ENCODE measurements at regions of chr4 and their contacts with region 1.

Region 1: DNA sequence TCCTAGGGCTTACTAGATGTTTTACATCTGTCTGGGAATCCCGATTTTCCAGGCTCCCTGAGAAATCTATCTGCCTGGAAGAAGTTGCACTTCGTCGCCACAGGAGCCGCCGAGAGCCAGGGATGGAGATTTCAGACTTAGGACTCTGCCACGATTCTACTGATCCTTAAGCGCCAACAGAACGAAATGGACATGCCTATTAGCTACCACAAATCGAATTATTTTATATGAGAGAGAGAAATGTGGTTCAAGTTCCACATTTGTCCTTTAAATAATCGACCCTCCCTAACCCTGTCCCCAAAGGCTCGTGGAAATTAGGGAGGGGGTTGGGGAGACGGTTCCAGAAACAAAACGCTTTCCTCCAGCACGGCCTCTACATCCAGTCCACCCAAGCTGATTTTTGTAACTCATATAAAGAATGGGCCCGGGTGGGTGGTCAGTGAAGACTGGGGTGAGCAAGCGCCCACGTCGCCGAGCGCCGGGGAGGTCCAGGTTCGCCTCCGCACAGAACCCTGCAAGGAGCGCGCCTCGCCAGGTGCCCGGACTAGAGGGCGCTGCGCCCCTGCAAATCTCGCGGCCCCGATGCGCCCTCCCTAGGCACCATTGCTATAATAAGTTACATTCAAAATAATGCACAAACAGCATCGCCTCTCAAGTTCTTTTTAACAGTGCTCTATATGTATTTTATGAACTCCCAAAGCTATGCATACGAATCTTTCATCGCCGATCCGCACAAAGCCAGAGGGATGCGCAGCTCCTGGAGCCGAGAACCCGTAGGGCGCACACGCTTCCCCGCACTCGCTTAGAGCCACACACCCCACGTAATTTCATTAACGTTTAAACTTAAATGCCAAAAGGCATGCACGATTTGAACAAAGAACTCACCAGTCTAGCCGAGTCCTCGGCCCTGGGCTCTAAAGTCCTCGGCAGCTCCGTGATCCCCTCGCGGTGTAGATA is 2.1 kb upstream of the FAT1 start:
- DNase-seq: peak; percentile 83
- H3K4me3 Mint-ChIP-seq: peak overlapping the region; percentile 93
- H3K27ac Mint-ChIP-seq: peak overlapping the region; percentile 93
- H3K4me1 Mint-ChIP-seq: peaks cover 30% of the 10 kb centered on the region
- H3K27me3 Mint-ChIP-seq: no peaks in the 10 kb centered on the region
- CTCF ChIP-seq: peak; percentile 75

Region 2: DNA sequence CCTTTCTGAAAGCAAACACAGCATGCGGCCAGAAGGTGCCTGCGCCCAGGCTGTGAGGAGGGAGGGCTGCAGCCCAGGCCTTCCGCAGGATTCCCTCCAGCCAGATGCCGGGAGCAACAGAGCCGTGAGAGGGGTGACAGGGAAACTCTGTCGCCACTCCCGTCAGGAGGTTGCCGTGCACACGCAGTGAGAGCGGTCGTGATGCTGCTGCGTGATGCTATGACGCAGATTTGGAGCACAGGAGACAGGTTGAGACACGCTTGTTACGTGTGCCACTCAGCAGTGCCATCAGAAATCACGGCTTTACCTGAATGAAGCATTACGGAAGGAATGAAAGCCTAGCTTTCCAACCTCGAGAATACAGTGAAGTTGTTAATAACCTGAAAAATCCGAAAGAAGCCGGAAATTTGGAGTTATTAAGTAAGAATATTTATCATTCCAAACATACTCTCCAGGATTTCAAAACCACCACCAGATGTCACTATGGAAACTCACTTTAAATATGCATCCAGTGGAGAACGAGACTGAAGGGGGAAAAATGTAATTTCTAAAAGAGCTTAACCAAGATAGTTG is 56.5 kb before region 1 on chr4:
- CTCF ChIA-PET with region 1: interaction called, 18 read pairs
- POLR2A ChIA-PET with region 1: interaction called, 40 read pairs
- intact Hi-C with region 1: loop called (anchors 1 kb)
- DNase-seq: peak; percentile 56
- H3K4me3 Mint-ChIP-seq: peak overlapping the region; percentile 17
- H3K27ac Mint-ChIP-seq: peak overlapping the region; percentile 63
- H3K4me1 Mint-ChIP-seq: peaks cover 34% of the 10 kb centered on the region
- H3K27me3 Mint-ChIP-seq: no peaks in the 10 kb centered on the region
- CTCF ChIP-seq: peak; percentile 18

Region 3: GRCh38 chr4:186845137-186845842 is 119.5 kb after region 1 on chr4:
- CTCF ChIA-PET with region 1: no interaction called
- POLR2A ChIA-PET with region 1: interaction called, 21 read pairs
- intact Hi-C with region 1: loop called (anchors 5 kb)
- DNase-seq: peak; percentile 46
- H3K4me3 Mint-ChIP-seq: peak overlapping the region; percentile 8
- H3K27ac Mint-ChIP-seq: peak overlapping the region; percentile 86
- H3K4me1 Mint-ChIP-seq: peaks cover 18% of the 10 kb centered on the region
- H3K27me3 Mint-ChIP-seq: no peaks in the 10 kb centered on the region
- CTCF ChIP-seq: no peak

Region 4: GRCh38 chr4:187128222-187128621 is 402.5 kb after region 1 on chr4:
- CTCF ChIA-PET with region 1: no interaction called
- POLR2A ChIA-PET with region 1: interaction called, 4 read pairs
- intact Hi-C with region 1: loop called (anchors 2 kb)
- DNase-seq: peak; percentile 52
- H3K4me3 Mint-ChIP-seq: no peak overlapping the region
- H3K27ac Mint-ChIP-seq: peak overlapping the region; percentile 63
- H3K4me1 Mint-ChIP-seq: peaks cover 15% of the 10 kb centered on the region
- H3K27me3 Mint-ChIP-seq: no peaks in the 10 kb centered on the region
- CTCF ChIP-seq: no peak

Region 5: DNA sequence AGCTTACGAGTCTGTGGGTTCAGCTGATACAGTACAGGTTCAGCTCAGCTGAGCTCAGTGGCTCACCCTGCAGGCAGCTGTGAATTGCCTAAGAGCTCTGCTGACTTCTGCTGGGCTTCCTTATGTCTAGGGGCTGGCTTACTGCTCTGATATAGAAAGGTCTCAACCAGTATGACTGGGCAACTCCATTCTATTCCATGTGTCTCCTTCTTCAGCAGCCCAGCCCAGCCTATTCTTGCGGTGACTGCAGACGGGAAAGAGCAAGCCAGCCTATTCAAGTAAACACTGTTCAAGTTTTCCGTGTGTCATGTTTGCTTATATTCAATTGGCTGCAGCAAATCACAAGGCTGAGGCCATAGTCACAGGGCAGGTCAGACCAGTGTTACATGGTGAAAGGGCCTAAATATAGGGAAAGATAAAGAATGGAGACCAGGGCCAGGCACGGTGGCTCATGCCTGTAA is 654.5 kb after region 1 on chr4:
- CTCF ChIA-PET with region 1: interaction called, 4 read pairs
- POLR2A ChIA-PET with region 1: no interaction called
- intact Hi-C with region 1: loop called (anchors 1 kb)
- DNase-seq: peak; percentile 38
- H3K4me3 Mint-ChIP-seq: no peak overlapping the region
- H3K27ac Mint-ChIP-seq: no peak overlapping the region
- H3K4me1 Mint-ChIP-seq: no peaks in the 10 kb centered on the region
- H3K27me3 Mint-ChIP-seq: no peaks in the 10 kb centered on the region
- CTCF ChIP-seq: no peak

Region 6: DNA sequence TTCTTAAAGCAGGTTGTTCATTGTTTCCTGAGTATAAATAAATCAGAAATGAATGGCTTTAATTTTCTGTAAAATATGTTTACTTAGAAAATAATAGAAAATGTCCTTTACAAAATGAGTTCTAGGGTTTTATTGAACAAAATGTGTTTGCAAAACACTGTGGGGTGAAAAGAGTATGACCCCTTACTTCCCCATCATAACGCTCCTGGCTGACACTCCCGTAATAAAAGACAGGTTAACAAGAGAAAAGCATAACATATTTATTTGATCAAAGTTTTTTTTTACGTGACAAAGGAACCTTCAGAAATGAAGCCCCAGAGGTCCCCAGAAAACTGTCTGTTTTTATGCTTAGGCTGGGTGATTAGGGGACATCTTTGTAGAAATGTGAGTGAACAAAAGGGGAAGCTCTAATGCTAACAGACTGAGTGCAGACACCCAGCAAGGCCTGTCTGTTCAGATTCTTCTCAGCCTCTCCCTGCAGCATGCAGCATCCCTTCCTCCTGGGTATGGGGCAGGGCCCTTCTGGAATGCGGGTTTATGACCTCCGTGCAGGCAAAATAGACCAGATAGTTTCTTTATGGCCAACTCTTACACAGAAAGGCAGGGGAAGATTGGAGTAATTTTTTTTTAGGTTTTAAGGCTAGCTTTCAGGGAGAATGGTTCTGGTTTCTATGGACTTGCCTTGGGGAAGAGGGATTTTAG is 1296.0 kb after region 1 on chr4:
- CTCF ChIA-PET with region 1: no interaction called
- POLR2A ChIA-PET with region 1: interaction called, 3 read pairs
- intact Hi-C with region 1: loop called (anchors 5 kb)
- DNase-seq: no peak
- H3K4me3 Mint-ChIP-seq: no peak overlapping the region
- H3K27ac Mint-ChIP-seq: peak overlapping the region; percentile 78
- H3K4me1 Mint-ChIP-seq: peaks cover 31% of the 10 kb centered on the region
- H3K27me3 Mint-ChIP-seq: no peaks in the 10 kb centered on the region
- CTCF ChIP-seq: no peak